OCI-LY7 (cell line): ENCODE measurements at regions of chr11 and their contacts with region 1.

Region 1: GRCh38 chr11:128522055-128522942 is 65.1 kb downstream of the ETS1 start:
- DNase-seq: peak; percentile 93
- H3K4me3 ChIP-seq: peak overlapping the region; percentile 98
- H3K27ac ChIP-seq: peak overlapping the region; percentile 79
- H3K4me1 ChIP-seq: peaks cover 44% of the 10 kb centered on the region
- CTCF ChIP-seq: no peak

Region 2: DNA sequence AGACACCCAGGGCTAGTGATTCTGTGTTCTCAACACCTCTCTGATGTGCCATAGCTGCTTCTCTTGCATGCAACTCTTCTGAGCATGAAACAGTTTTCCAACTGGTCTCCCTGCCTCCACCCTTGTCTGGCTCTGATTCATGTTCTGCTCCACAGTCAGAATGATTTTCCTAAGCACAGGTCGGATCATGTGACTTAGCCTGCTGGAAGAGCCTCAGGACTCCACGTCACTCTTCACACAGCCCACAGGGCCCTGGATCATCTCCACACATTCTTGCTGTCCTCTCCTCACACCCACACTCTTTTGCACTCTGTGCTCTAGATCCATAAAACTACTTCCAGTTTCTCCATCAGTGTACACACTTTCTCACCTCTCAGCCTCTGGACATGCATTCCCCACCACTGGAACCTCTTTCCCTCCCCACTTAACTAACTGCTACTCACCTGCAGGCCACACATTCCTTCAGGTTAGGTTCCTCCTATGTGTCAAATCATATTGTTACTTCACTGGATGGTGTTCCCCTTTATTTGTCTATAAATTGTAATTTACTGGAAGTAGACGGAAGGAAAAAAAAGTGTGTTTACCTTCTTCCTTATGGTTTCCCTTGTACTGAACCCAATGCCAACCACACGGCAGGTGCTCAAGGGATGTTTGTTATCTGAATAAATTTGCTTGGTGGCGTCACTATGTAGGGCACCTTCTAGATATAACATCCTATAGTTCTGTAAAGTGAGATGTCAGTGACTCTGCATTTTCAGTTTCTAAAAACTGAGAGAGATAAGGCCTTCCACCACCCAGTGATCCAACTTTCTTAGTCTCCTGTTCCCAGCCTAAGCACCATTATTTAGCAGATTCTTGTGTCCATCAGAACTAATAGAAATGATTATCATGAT is 68.6 kb before region 1 on chr11:
- CTCF ChIA-PET with region 1: no interaction called
- POLR2A ChIA-PET with region 1: no interaction called
- intact Hi-C with region 1: no loop called
- DNase-seq: no peak
- H3K4me3 ChIP-seq: no peak overlapping the region
- H3K27ac ChIP-seq: no peak overlapping the region
- H3K4me1 ChIP-seq: no peaks in the 10 kb centered on the region
- CTCF ChIP-seq: no peak

Region 3: DNA sequence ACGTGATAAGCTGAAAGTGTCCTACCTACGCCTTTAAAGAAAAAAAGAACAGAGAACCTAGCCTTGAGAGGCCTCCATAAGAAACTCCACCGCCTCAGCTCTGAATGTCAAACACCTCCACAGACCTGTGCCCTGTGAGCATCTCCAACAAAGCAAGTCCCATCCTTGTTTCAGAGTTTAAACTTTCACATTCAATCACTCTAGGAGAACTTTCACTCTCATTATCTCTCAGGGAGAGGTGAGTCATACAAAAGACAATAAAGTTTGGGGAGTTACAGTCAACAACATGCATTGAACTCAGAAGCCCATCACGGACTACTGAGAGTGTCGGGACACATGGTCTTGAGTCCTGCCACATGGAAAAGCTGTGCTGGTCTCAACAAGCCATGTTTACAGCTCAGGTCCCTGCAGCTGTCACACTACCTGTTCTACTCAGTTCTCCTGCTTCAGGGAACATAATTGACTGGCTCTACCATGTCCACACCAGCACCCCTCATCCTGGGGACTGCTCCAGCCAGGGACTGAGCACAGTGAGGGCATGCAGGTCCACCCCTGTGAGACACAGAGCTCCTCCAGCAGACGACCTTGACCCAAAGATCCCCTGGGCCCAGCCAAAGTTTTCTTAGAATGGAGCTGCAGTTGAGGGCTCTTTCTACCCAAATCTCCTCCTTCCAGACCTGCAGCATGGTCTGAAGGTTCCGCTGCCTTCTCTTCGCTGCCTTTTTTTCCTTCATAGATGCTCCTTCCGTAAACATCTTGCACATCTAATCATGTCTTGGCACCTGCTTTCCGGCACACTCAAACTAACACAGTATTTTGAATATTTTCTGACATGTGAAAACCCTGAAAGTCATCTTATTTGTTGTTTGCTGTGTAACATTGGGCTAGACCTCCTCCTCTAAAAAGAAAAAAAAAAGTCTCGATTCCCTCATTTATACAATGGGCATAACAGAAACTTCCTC is 49.9 kb before region 1 on chr11:
- CTCF ChIA-PET with region 1: interaction called, 23 read pairs
- POLR2A ChIA-PET with region 1: interaction called, 184 read pairs
- intact Hi-C with region 1: loop called (anchors 1 kb)
- DNase-seq: peak; percentile 61
- H3K4me3 ChIP-seq: peak overlapping the region; percentile 51
- H3K27ac ChIP-seq: peak overlapping the region; percentile 98
- H3K4me1 ChIP-seq: peaks cover 100% of the 10 kb centered on the region
- CTCF ChIP-seq: no peak

Region 4: DNA sequence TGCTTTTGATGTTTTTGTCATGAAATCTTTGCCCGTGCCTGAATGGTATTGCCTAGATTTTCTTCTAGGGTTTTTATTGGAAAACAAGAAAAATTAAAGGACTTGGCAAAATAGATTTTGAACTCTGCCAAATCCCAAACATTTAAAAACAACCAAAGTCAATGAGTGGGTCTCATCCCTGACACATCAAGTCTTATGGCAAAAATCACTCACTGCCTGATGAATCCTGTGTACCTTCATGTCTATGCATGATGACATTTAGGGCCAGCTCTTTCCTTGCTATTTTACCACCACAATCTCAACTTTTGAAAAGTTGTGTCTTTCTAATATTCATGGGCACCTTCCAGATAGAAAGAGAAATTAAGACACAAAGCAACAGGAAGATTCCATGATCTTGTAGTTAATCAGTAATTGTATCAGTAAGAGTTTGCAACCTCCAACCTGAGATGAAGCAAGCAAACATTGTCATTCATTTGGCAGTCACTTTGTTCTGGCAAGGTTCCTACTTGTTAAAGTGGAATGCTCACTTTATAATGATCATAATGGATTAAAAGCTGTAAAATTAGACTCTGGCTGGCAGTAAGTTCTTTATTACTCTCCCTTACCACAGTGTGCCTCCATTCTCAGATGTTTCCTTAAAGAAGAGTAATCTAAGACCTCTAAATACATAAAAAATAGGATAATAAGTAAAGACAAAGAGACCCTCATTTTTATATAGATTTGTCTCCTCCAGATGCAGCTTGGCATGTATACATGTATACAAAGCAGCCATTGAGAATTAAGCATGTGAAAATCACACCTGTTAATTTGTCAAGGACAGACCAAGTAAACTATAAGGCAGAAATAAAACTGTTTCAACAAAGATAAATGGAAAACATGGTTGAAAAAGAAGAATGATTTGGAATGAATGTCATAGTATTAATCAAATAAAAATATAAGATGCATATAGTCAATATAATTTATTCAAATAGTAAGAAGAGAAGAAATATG is 13.5 kb after region 1 on chr11:
- CTCF ChIA-PET with region 1: no interaction called
- POLR2A ChIA-PET with region 1: interaction called, 21 read pairs
- intact Hi-C with region 1: no loop called
- DNase-seq: no peak
- H3K4me3 ChIP-seq: no peak overlapping the region
- H3K27ac ChIP-seq: no peak overlapping the region
- H3K4me1 ChIP-seq: peaks cover 4% of the 10 kb centered on the region
- CTCF ChIP-seq: no peak

Region 5: GRCh38 chr11:128610721-128611617 is 88.7 kb after region 1 on chr11:
- CTCF ChIA-PET with region 1: interaction called, 4 read pairs
- POLR2A ChIA-PET with region 1: interaction called, 113 read pairs
- intact Hi-C with region 1: loop called (anchors 1 kb)
- DNase-seq: peak; percentile 98
- H3K4me3 ChIP-seq: peak overlapping the region; percentile 45
- H3K27ac ChIP-seq: peak overlapping the region; percentile 99
- H3K4me1 ChIP-seq: peaks cover 93% of the 10 kb centered on the region
- CTCF ChIP-seq: no peak

Region 6: GRCh38 chr11:128733440-128734102 is 211.3 kb after region 1 on chr11:
- CTCF ChIA-PET with region 1: no interaction called
- POLR2A ChIA-PET with region 1: interaction called, 20 read pairs
- intact Hi-C with region 1: loop called (anchors 5 kb)
- DNase-seq: peak; percentile 83
- H3K4me3 ChIP-seq: peak overlapping the region; percentile 50
- H3K27ac ChIP-seq: peak overlapping the region; percentile 99
- H3K4me1 ChIP-seq: peaks cover 100% of the 10 kb centered on the region
- CTCF ChIP-seq: no peak